ENCODE measurements at regions of chr17 and their contacts with region 1.

Region 1: DNA sequence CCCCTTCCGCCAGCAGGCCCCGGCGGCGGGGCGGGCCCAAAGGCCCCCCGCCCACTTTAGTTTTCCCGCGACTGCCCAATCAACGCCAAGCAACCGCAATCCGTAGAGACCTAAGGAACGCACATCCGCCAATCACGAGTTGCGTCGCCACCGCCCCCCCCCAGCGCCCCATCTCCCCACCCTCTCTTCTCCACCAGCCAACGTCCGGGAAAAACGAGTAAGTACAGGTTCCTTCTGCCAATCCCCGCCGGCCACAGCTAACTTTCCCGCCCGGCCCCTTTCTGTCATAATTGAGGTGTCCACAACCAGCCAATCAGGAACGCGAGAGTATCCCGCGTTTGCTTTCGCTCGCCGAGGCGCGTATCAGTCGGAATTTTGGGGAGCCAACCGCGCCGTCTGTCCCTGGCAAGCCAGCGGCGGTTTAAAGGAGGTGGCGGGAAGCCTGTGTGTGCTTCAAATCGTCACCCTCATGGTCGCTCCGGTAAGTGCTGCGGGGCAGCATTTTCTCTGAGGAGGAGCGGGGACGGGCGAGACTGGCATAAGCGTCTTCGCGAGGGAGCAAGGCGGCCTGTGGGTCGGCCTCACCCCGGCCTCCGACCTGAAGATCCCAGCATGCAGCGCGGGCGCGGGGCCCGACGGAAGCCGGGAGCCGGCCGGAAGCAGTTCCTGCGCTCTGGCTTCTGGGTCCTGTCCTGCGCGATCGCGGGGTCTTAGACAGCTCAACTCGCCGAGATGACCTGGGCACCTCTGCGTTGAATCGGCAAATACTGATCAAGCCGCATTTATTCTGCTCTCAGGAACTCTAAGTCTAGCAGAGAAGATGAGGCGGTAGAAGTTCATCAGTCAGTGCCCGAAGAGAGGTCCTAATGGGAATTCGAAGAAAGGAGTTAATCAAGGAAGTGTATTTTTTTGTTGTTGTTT is at the start of gene MIS12:
- DNase-seq: peak; percentile 98
- ATAC-seq: peak; percentile 90
- H3K4me3 ChIP-seq: peak within 1 kb of the TSS; percentile 90 to 99 (median 92)
- H3K4me3 Mint-ChIP-seq: peak within 1 kb of the TSS; percentile 94
- H3K27ac ChIP-seq: peak within 1 kb of the TSS; percentile 99 to 100
- H3K27ac Mint-ChIP-seq: peak within 1 kb of the TSS; percentile 97
- H3K4me1 ChIP-seq: peaks cover 17 to 26% of the 10 kb centered on the region in 2 donors
- H3K4me1 Mint-ChIP-seq: peaks cover 42% of the 10 kb centered on the region
- H3K27me3 ChIP-seq: no peaks in the 10 kb centered on the region
- H3K27me3 Mint-ChIP-seq: no peaks in the 10 kb centered on the region
- CTCF ChIP-seq: no peak
- total RNA-seq, gene MIS12: 33.2 and 41.1 TPM in 2 replicates

Region 2: DNA sequence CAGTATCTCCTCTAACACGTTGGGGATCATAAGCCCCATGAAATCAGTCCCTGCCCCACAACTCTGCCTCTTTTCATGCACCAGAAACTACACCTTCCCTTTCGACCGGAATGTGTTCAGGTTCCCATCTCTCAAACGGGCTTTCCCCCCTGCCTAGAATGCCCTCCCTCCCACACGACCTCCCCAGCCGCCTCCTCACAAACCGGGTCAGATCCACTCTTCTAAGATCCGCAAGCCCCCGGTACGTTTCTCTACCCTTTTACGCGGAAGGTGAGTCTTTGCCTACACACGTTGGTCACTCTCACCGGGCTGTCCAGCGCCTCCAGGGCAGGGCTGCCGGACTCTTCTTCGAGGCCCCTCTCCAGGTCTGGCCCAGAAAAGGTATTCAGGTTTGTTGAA is 18.4 kb before region 1 on chr17:
- CTCF ChIA-PET with region 1: interaction called, 6 read pairs
- POLR2A ChIA-PET with region 1: interaction called, 14 read pairs
- intact Hi-C with region 1: loop called (anchors 1 kb)
- DNase-seq: no peak
- ATAC-seq: no peak
- H3K4me3 ChIP-seq: peak overlapping the region; percentile 61 to 94 (median 86)
- H3K4me3 Mint-ChIP-seq: peak overlapping the region; percentile 90
- H3K27ac ChIP-seq: peak overlapping the region in 1 of 2 donors; percentile 60
- H3K27ac Mint-ChIP-seq: peak overlapping the region; percentile 32
- H3K4me1 ChIP-seq: peaks cover 11 to 20% of the 10 kb centered on the region in 2 donors
- H3K4me1 Mint-ChIP-seq: peaks cover 29% of the 10 kb centered on the region
- H3K27me3 ChIP-seq: no peaks in the 10 kb centered on the region
- H3K27me3 Mint-ChIP-seq: no peaks in the 10 kb centered on the region
- CTCF ChIP-seq: no peak

Region 3: DNA sequence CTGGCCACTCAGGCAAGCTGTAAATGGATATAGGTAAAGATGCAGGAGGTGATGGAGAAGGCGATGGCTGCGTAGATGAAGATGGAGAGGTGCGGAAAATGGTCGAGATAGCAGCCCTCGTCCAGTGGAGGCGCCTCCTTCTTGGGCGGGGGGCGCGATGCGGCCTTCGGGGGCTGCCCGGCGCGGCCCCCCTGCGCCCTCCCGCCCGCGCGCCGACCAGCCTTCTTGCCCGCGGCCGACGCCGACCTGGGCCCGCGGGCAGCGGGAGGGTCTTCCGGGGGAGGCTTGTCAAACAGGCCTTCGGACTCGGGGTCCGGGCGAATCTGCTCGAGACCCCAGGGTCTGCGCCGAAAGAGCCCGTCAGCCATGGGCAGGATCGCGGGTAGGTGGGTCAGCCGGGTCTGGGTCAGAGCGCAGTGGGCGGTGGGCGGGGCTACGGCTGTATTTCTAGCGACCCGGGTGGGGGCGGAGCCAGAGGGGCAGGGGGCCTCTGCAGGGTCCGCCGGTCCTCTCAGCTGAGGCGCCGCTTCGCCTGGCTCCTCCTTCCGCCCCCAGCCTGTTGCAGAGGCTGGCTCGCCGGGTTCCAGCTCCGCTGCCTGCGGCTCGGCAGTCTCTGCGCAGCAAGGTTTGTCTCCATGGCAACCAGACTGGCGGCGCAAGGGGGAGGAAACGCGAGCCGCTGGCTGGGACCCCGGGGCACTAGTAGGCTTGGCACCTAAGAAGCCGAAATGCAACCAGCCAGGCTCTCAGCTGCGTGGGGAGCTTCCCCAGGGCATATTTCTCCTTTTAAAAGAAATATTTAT is 14.3 kb after region 1 on chr17:
- CTCF ChIA-PET with region 1: interaction called, 3 read pairs
- POLR2A ChIA-PET with region 1: interaction called, 12 read pairs
- intact Hi-C with region 1: loop called (anchors 1 kb)
- DNase-seq: peak; percentile 85
- ATAC-seq: peak; percentile 92
- H3K4me3 ChIP-seq: peak overlapping the region in 4 of 5 experiments; percentile 43 to 71 (median 61)
- H3K4me3 Mint-ChIP-seq: peak overlapping the region; percentile 98
- H3K27ac ChIP-seq: no peak overlapping the region
- H3K27ac Mint-ChIP-seq: peak overlapping the region; percentile 75
- H3K4me1 ChIP-seq: peaks cover 10 to 22% of the 10 kb centered on the region in 2 donors
- H3K4me1 Mint-ChIP-seq: peaks cover 25% of the 10 kb centered on the region
- H3K27me3 ChIP-seq: peaks cover 0 to 6% (median 3%) of the 10 kb centered on the region in 4 experiments
- H3K27me3 Mint-ChIP-seq: peaks cover under 1% of the 10 kb centered on the region
- CTCF ChIP-seq: no peak